Caco-2 (cell line): ENCODE measurements at regions of chr12 and their contacts with region 1.

Region 1: DNA sequence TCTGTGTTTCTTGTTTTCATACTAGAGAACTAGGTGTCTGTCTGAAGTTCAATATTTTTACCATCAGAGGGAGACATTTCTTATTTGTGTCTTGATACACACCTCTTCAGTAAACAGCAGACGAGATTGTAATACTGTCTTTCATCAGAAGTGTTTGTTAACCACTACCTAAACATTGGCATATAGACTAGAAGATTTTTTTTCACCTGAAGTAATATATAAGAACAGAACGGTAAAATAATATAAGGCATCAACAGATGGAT is 190.7 kb downstream of the ACSS3 start:
- DNase-seq: peak in 1 of 2 experiments; percentile 36
- H3K4me3 ChIP-seq: no peak overlapping the region
- H3K4me3 Mint-ChIP-seq: peak overlapping the region; percentile 34
- H3K27ac Mint-ChIP-seq: no peak overlapping the region
- H3K4me1 ChIP-seq: no peaks in the 10 kb centered on the region
- H3K4me1 Mint-ChIP-seq: no peaks in the 10 kb centered on the region
- H3K27me3 ChIP-seq: no peaks in the 10 kb centered on the region
- H3K27me3 Mint-ChIP-seq: peaks cover 4% of the 10 kb centered on the region
- CTCF ChIP-seq: peak; percentile 46

Region 2: DNA sequence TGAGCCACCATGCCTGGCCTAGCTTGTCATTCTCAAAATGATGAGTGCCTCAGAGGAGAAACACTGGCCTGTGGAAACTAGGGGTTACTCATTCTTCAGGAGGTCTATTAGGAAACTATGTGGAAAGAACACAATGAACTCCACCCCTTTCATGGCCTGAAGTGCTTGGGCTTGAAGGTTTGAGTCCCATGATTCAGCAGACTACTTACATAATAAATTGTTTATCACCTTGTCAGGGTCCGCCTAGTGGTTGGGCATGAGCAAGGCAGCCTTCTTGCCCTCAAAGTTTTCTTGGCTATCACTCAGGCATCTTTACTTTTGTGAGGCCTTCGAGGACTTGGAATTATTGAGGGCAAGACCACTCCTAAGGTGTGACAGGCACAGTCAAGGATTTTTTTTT is 60.5 kb after region 1 on chr12:
- CTCF ChIA-PET with region 1: no interaction called
- POLR2A ChIA-PET with region 1: no interaction called
- intact Hi-C with region 1: loop called (anchors 2 kb)
- DNase-seq: peak in 1 of 2 experiments; percentile 40
- H3K4me3 ChIP-seq: no peak overlapping the region
- H3K4me3 Mint-ChIP-seq: no peak overlapping the region
- H3K27ac Mint-ChIP-seq: no peak overlapping the region
- H3K4me1 ChIP-seq: no peaks in the 10 kb centered on the region
- H3K4me1 Mint-ChIP-seq: no peaks in the 10 kb centered on the region
- H3K27me3 ChIP-seq: no peaks in the 10 kb centered on the region
- H3K27me3 Mint-ChIP-seq: peaks cover 3% of the 10 kb centered on the region
- CTCF ChIP-seq: peak; percentile 45 to 59

Region 3: DNA sequence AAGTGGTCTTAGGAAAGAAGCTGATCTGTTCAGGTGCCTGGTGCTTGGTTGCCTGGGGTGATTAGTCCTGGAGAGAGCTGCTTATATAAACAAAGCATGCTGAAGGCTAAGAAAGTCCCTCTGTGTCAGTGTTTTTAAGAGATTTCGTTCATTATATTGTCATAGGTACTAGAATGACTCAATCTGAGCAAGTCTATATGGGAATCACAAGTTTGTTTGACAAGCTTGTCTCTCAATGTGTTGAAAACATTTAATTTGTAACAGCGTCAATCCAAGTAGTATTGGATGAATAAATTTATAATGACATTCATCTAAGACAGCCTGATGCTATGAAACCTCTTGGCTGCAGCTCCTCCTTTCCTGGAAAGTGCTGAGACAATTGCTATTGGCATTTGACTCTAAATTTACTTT is 1674.4 kb after region 1 on chr12:
- CTCF ChIA-PET with region 1: interaction called, 12 read pairs
- POLR2A ChIA-PET with region 1: no interaction called
- intact Hi-C with region 1: no loop called
- DNase-seq: no peak
- H3K4me3 ChIP-seq: no peak overlapping the region
- H3K4me3 Mint-ChIP-seq: no peak overlapping the region
- H3K27ac Mint-ChIP-seq: no peak overlapping the region
- H3K4me1 ChIP-seq: no peaks in the 10 kb centered on the region
- H3K4me1 Mint-ChIP-seq: no peaks in the 10 kb centered on the region
- H3K27me3 ChIP-seq: no peaks in the 10 kb centered on the region
- H3K27me3 Mint-ChIP-seq: no peaks in the 10 kb centered on the region
- CTCF ChIP-seq: no peak